GM10248 (cell line): ENCODE measurements at regions of chr3 and their contacts with region 1.

Region 1: DNA sequence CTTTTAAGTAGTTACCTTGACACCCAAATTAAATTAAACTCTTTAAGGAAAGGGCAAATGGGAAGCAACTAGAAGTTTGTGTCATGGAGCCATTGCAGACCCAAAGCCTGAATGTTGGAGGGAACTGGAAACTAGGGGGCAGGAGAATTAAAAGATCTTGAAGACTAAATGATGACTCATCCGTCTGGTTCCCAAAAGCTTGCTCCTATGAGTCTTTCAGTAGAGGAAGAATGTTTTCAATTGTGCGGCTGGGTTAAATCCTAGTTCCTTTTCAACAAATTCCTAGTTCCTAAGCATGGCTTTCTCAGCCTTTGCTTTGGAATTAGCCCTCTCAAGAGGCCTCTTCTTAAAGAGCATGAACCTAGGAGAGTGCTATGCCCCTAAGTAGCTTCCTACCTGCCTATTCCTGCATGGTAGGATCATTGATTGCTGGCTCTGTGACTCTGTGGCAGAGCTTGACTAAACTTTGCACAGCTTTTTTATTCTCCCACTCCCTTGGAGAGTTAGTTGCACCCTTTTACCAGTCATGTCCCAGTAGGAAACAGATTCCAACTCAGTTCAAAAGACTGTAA is 17.7 kb downstream of the CLEC3B start:
- DNase-seq: no peak
- CTCF ChIP-seq: no peak

Region 2: GRCh38 chr3:45026957-45027356 is 16.9 kb before region 1 on chr3:
- CTCF ChIA-PET with region 1: interaction called, 46 read pairs
- POLR2A ChIA-PET with region 1: no interaction called
- DNase-seq: no peak
- CTCF ChIP-seq: no peak